ENCODE measurements at regions of chr6 and their contacts with region 1.

Region 1: DNA sequence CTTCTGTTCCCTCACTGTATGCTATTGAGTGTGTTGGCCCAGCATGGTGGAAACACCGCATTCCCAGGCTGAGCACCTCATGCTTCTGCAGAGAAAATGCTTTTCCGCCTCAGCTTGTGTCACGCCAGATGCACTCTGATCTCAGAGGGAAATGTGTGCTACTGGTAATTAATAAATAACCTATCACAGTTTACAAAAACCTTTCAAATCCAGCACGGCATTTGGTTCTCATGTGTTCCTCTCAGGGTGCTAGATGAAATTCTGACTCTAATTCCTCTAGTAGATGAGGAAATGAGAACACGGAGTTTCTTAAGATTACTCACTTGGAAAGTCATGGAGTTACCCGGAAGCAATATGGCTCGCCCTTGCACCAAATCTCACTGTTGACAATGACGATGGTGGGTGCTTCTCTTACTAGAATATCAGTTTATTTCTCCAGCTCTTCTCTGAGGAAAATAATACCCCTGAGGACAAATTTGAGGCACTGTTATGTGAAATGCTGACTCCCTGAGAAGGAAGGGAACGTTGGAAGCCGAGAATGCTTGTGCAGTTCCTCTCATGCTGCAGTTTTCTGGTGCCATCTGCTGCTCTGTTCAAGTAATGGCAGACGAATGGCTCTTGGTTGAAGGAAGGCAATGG is 116.6 kb downstream of the RNF144B start:
- DNase-seq: peak; percentile 69
- ATAC-seq: peak; percentile 89

Region 2: GRCh38 chr6:18323935-18324705 is 179.6 kb before region 1 on chr6:
- intact Hi-C with region 1: loop called (anchors 10 kb)
- DNase-seq: no peak
- ATAC-seq: peak; percentile 66

Region 3: DNA sequence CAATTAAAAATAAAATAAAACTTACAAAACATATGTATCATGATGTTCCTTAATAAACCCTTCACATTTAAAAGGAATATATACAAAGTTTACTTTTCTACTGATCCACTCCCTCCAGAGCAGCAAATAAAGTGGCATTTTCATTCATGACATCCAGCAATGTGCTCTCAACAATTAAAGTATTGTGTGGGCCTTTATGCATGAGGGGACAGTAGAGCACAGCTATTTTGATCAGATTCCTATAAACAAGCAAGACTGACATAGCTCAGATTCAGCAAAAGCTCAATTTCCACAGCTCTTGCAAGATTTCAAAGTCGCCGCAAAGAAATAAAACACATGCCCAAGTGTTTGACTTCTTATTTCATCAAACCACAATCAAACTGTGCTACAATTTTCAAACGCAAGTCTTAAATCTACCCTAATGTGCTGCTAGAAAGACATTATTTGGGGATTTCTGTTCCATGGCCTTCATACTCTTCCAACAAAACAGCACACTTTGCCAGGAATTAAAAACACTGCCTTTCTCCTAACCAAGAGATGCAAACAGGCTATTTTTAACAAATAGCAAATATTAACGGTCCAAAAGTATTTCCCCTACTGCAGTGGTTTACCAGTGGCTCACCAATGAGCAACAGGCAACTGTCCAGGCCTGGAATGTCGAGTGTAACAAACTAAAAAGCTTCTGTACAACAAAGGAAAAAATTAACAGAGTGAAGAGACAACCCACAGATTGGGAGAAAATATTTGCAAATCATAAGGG is 1656.2 kb after region 1 on chr6:
- intact Hi-C with region 1: no loop called
- DNase-seq: no peak
- ATAC-seq: peak; percentile 51

Measured in sciatic nerve (tissue), 2 donors.